ENCODE measurements at regions of chr10 and their contacts with region 1.

Region 1: DNA sequence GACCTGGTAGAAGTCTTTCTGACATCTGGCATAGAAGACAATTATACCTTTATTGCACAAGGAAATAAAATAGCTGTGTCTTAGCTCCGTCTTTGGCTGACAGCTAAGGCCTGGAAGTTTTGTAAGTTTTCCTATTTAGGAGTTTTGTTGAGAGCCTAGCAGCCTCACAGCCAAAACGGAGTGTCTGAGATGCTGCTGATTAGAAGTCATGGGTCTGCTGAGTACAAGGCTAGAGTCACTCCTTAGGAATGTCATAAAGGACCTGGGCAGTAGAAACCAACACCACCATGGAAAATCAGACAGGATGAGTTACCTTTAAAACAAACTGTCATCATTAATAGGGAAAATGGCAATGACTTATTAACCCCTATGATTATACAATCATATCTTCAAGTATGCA is 442.5 kb downstream of the KCNMA1 start:
- DNase-seq: no peak

Region 2: DNA sequence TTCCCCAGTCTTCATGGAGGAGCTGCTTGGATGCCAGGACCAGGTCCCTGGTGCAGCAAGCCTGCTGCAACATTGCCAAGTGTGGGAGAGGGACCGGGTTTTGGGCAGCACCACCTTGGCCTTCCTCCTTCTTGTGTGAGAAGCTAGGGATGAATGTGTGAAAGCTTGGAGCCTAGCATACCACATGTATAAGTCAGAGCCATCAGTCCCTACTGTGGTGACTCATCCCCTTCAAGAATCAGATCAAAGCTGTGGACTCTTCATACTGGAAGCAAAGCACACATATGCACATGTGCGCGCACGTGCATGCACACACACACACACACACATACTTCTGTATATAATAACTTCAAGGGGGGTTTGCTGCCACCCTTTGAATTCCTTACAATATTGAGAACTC is 1235.9 kb before region 1 on chr10:
- intact Hi-C with region 1: no loop called
- DNase-seq: no peak

Region 3: DNA sequence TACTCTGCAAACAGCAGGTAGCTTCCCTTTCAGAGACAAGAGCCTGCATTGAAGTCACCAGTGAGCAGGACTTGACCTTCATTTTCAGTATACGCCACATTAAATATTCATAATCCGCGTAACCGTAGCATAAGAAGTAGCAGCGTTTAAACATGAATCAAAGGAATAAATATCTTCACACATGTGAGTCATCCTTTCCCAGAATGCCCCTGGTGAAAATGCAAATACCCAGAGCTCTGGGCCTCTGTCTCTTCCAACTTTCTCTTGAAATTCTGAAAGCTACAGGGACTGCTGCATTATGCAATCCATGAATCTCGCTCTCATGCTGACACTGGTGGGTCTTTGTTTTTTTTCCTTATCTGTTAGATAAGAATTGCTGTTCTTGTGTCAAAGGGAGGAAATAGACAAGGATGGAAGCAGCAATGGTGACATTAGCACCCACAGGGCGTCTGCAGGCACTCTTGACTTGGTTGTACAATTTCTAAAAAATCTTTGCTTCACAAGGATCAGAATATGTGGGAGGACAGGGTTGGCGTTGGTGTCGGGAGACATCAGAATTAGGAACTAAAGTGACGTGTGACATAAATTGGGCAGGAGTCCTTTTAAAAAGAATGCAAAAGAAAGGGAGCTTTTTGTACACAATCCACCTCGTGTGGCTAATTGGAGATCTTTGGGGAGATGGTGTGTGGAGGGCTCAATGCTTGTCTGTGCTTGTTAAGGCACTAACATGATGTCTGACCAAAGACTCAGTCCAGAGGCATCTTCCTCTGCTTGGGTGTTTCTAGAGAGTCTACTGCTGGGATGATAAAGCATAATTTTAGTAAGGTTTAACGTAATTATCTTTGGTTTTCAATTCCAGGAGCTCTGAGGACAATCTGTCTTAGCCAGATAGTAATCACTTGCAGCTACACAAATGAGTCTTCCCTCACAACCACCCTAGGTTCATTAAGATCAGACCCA is 52.2 kb after region 1 on chr10:
- intact Hi-C with region 1: loop called in 1 of 2 experiments (anchors 10 kb)
- DNase-seq: no peak